GM13976 (cell line): ENCODE measurements at regions of chr13 and their contacts with region 1.

Region 1: DNA sequence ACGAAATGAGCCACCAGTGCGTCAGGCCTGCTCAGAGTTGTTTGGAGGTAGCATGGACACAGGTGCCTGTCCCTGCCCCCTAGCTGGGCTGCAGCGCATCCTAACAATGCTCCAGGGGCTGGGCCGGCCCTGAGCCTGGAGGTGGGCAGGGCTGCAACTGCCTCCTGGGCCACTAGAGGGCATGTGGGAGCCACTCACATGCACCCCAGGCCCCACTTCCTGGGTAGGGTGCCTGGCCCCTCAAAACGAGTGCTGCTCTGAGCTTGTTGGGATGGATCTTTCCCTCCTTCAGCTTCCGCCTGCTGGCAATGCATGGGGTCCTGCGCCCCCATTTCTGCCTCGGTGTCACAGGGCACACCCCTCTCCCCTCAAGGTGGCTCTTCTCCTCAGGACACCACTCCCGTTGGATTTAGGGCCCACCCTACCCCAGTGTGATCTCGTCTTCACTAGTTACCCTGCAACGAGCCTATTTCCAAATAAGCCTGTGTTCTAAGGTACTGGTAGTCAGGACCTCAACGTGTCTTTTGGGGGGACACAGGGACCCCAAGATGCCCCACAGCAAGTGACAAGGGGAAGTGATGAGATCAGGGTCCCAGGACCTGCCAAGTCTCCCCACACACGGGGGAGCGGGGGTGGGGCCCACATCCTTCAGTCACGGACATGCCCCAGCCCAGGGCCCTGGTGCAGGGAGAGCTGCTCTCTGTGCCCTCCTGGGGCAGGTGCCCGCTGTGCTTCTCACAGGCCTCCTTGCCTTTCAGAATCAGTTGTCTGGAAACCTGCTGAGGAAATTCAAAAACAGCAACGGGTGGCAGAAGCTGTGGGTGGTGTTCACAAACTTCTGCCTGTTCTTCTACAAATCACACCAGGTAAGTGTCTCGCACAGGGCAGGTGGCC is 131.3 kb downstream of the STK24 start:
- DNase-seq: peak; percentile 92
- CTCF ChIP-seq: peak; percentile 95

Region 2: GRCh38 chr13:98142380-98143156 is 303.0 kb before region 1 on chr13 and contains the start of gene FARP1:
- in situ Hi-C with region 1: no loop called
- DNase-seq: peak; percentile 77
- CTCF ChIP-seq: peak; percentile 38

Region 3: GRCh38 chr13:98658214-98658530 is 212.6 kb after region 1 on chr13:
- in situ Hi-C with region 1: loop called (anchors 5 kb)
- DNase-seq: no peak
- CTCF ChIP-seq: no peak